GM23248 (cell line): ENCODE measurements at regions of chr14 and their contacts with region 1.

Region 1: DNA sequence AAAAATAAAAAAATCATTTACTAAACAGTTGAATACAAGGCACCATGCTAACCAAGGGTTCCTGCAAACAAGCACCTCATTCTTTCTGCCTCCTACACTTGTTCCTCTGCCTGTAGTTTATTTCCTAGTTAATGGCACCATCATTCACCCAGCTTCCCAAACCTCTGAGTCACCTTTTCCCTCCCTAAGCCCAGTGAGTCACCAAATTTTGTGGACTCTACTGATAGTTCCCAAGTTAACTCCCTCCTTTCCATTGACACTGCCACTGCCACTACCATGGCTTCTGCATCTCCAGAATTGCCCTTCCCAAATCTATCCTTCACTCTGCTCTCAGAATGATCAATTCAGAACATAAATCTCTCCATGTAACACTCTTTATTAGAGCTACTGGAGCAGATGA is 2.0 kb upstream of the GARIN2 start:
- DNase-seq: peak; percentile 93
- H3K4me3 ChIP-seq: no peak overlapping the region
- H3K27ac ChIP-seq: no peak overlapping the region
- H3K4me1 ChIP-seq: peaks cover 33% of the 10 kb centered on the region
- H3K27me3 ChIP-seq: no peaks in the 10 kb centered on the region

Region 2: GRCh38 chr14:67269298-67270061 is 82.3 kb after region 1 on chr14:
- in situ Hi-C with region 1: loop called (anchors 10 kb)
- DNase-seq: peak; percentile 88
- H3K4me3 ChIP-seq: peak overlapping the region; percentile 66
- H3K27ac ChIP-seq: peak overlapping the region; percentile 75
- H3K4me1 ChIP-seq: peaks cover 33% of the 10 kb centered on the region
- H3K27me3 ChIP-seq: no peaks in the 10 kb centered on the region

Region 3: DNA sequence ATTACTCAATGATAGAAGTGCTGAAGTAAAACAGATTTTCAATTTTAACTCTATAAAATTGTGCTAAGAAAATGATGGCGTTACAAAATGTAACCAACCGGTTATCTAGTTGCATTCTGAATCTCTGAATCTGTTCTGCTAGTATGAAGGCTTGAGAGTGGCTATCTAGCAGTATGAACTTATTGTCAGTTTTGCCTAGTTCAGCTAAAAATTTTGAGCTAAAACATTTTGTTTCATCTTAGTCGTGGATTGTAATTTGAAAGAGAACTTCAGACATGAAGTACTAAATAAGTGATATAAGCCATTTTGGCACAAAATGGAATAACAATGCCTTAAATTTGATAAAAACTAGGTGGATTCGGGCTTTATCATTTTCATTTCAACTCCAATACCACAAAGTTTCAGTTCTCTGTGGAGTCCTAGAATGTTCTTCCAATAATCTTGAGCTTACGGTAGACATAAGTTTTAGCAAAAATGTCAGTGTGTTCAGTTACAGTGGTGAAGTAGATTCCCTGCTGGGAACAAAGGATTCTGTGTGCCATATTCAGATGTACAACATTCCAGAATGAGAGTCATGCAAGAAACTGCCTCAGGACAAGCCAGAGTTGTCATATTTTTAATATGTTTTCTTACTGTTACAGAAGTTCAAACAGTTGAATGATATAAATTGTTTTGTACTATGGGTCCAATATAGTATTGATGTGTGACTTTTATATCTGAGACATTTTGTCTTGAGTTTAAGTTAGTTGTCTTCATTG is 144.3 kb after region 1 on chr14:
- in situ Hi-C with region 1: no loop called
- DNase-seq: peak; percentile 51
- H3K4me3 ChIP-seq: no peak overlapping the region
- H3K27ac ChIP-seq: peak overlapping the region; percentile 16
- H3K4me1 ChIP-seq: peaks cover 17% of the 10 kb centered on the region
- H3K27me3 ChIP-seq: no peaks in the 10 kb centered on the region

Region 4: DNA sequence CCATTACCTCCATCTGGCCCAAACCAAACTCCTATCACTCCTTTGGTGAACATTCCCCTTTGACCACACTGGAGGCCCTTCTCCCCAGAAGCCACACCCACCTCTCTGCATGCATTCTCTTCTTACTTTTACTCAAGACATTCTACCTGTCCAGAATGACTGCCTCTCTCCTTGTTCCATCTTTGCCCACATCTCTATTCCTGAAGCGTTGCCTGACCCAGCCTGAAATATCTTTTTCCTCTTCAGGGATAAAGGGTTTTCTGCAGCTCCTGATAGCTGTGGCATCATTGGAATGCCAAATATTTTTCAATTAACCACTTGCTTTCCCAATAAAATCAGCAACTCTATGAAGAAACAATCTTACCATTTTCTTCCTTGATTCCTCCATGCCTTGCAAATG is 209.3 kb after region 1 on chr14:
- in situ Hi-C with region 1: no loop called
- DNase-seq: peak; percentile 25
- H3K4me3 ChIP-seq: no peak overlapping the region
- H3K27ac ChIP-seq: no peak overlapping the region
- H3K4me1 ChIP-seq: peaks cover 15% of the 10 kb centered on the region
- H3K27me3 ChIP-seq: no peaks in the 10 kb centered on the region

Region 5: GRCh38 chr14:67409451-67409850 is 222.2 kb after region 1 on chr14:
- in situ Hi-C with region 1: no loop called
- DNase-seq: no peak
- H3K4me3 ChIP-seq: no peak overlapping the region
- H3K27ac ChIP-seq: no peak overlapping the region
- H3K4me1 ChIP-seq: peaks cover 11% of the 10 kb centered on the region
- H3K27me3 ChIP-seq: no peaks in the 10 kb centered on the region

Region 6: DNA sequence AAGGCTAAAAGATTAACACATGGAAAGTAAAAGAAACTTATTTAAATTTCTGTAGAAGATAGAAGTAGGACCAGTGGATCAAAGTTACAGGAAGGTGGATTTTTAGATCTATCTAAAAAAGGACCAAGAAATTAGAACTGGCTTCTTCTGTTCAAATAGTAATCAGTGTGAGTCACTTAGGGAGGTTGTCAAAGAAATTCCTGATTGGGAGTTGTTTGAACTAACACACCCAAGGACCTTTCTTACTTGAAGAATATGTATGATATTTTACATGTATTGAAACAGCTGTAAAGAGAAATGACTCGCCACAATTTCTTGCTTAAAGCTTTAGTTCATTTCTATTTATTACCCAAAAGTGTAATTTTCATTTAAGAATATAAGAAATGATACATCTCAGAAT is 889.2 kb after region 1 on chr14:
- in situ Hi-C with region 1: no loop called
- DNase-seq: peak; percentile 40
- H3K4me3 ChIP-seq: no peak overlapping the region
- H3K27ac ChIP-seq: no peak overlapping the region
- H3K4me1 ChIP-seq: peaks cover 8% of the 10 kb centered on the region; the same call in 1 of the 2 replicates
- H3K27me3 ChIP-seq: no peaks in the 10 kb centered on the region